ENCODE measurements at regions of chr20 and their contacts with region 1.

Region 1: GRCh38 chr20:43040427-43040826 is 149.3 kb downstream of the PTPRT start:
- DNase-seq: no peak
- H3K4me3 ChIP-seq: no peak overlapping the region
- H3K4me3 Mint-ChIP-seq: no peak overlapping the region
- H3K27ac ChIP-seq: no peak overlapping the region
- H3K27ac Mint-ChIP-seq: no peak overlapping the region
- H3K4me1 ChIP-seq: no peaks in the 10 kb centered on the region
- H3K4me1 Mint-ChIP-seq: no peaks in the 10 kb centered on the region
- H3K27me3 ChIP-seq: no peaks in the 10 kb centered on the region
- H3K27me3 Mint-ChIP-seq: peaks cover 0 to 3% (median 1%) of the 10 kb centered on the region in 3 donors
- CTCF ChIP-seq: no peak

Region 2: GRCh38 chr20:42986143-42986773 is 54.2 kb before region 1 on chr20:
- intact Hi-C with region 1: loop called in 1 of 2 experiments (anchors 10 kb)
- DNase-seq: no peak
- H3K4me3 ChIP-seq: no peak overlapping the region
- H3K4me3 Mint-ChIP-seq: no peak overlapping the region
- H3K27ac ChIP-seq: no peak overlapping the region
- H3K27ac Mint-ChIP-seq: no peak overlapping the region
- H3K4me1 ChIP-seq: no peaks in the 10 kb centered on the region
- H3K4me1 Mint-ChIP-seq: no peaks in the 10 kb centered on the region
- H3K27me3 ChIP-seq: no peaks in the 10 kb centered on the region
- H3K27me3 Mint-ChIP-seq: peaks cover 0 to 3% (median 2%) of the 10 kb centered on the region in 3 donors
- CTCF ChIP-seq: no peak

Region 3: GRCh38 chr20:43096126-43096930 is 55.9 kb after region 1 on chr20:
- intact Hi-C with region 1: no loop called
- DNase-seq: no peak
- H3K4me3 ChIP-seq: no peak overlapping the region
- H3K4me3 Mint-ChIP-seq: no peak overlapping the region
- H3K27ac ChIP-seq: no peak overlapping the region
- H3K27ac Mint-ChIP-seq: no peak overlapping the region
- H3K4me1 ChIP-seq: no peaks in the 10 kb centered on the region
- H3K4me1 Mint-ChIP-seq: no peaks in the 10 kb centered on the region
- H3K27me3 ChIP-seq: no peaks in the 10 kb centered on the region
- H3K27me3 Mint-ChIP-seq: peaks cover 0 to 1% (median 1%) of the 10 kb centered on the region in 3 donors
- CTCF ChIP-seq: no peak